ENCODE measurements at regions of chr6 and their contacts with region 1.

Region 1: DNA sequence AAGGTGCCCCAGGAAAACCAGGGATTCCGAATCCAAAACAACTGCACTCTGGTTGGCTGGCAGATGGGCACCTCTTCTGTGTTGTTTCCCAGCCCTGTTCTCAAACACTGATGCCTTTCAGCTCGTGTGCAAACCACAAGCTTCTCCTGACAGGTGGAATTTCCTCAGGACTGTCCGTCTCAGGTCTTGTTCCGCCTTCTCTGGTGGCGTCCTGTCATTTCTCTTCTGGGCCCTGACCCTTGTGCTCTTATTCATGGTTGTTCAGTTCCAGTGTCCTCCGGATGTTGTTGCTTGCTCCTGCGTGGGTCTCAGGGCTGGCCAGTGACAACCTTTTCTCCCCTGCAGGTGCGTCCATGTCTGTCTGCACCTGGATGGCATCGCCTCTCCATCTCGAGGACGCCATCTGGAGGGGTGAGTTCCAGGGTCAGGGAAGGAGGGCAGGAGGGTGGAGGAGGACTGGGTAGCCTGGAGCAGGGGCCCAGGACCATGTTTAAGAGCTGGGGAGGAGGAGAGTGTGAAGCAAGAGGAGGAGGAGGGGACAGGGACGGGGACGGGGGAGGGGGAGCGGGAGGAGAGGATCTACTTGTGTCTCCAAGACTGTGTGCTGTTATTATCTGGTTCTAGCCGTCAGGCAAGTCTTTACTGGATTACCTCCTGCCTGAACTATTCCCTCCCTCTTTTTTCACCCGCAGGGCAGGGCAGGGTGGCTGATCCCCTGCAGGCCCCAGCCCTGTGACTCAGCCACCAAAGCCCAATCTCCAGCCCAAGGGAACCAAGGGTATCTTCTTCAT is 32.0 kb upstream of the TULP1 start:
- DNase-seq: no peak
- ATAC-seq: no peak
- H3K4me3 Mint-ChIP-seq: no peak overlapping the region
- H3K27ac Mint-ChIP-seq: no peak overlapping the region
- H3K4me1 Mint-ChIP-seq: peaks cover 1% of the 10 kb centered on the region
- H3K27me3 Mint-ChIP-seq: peaks cover 6% of the 10 kb centered on the region

Region 2: DNA sequence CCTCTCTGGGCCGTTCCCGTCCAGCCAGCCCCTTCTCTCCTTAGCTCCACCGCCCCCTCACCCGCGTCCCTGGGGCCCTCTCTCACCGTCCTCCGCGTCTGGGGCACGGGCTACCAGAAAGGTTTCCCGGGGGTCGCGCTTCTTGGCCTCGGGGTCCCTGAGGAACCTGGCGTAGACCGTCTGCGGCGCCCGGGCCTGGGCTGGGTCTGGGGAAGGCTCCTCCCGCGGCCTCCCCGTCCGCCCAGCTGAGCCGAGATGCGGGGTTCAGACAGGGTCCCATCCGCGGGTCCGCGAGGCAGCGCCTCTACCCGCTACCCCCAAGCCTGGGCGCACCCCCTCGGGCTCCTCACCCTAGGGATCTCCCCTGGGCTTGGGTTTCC is 33.2 kb before region 1 on chr6:
- CTCF ChIA-PET with region 1: no interaction called
- DNase-seq: no peak
- ATAC-seq: no peak
- H3K4me3 Mint-ChIP-seq: no peak overlapping the region
- H3K27ac Mint-ChIP-seq: no peak overlapping the region
- H3K4me1 Mint-ChIP-seq: peaks cover 2% of the 10 kb centered on the region
- H3K27me3 Mint-ChIP-seq: peaks cover 29% of the 10 kb centered on the region

Region 3: DNA sequence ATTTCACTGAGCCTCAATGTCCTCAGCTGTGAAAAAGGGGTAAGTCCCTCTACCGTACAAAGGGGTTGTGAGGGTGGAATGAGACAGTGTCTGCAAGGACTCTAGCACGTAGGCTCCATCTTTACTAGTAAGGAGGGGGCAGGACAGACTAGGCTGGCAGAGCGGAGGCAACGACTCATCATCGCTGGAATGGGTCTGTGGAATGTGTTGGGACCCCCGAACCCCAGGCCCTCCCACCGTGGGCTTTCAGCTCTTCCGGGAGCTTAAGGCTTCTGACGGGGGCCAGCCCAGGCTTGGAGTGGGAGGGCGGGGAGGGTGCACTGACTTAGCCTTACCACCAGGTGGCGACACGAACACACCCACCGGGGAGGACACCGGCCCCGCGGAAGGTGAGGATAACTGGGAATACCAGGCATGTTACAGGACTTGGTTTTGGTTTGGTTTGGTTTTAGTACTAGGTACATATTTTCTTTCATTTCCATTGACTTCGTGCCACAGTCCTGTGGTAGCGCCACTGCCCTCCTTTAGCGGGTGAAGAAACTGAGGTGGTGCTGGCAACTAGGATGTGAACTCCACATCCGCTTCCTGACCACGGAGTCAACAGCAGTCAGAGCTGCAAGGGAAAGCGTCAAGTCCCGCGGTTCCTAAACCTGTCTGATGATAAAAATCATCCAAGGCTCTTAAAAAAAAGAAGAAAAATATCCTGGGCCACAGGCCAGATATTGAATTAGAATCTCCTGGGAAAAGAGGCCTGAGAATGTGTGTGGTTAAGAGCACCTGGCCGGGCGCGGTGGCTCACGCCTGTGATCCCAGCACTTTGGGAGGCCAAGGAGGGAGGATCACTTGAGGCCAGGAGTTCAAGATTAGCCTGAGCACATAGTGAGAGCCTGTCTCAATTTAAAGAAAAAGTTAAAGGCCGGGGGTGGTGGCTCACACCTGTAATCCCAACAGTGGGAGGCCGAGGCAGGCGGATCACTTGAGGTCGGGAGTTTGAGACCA is 21.8 kb before region 1 on chr6:
- CTCF ChIA-PET with region 1: interaction called, 73 read pairs
- DNase-seq: peak; percentile 88
- ATAC-seq: peak; percentile 91
- H3K4me3 Mint-ChIP-seq: peak overlapping the region; percentile 56
- H3K27ac Mint-ChIP-seq: peak overlapping the region; percentile 73
- H3K4me1 Mint-ChIP-seq: peaks cover 17% of the 10 kb centered on the region
- H3K27me3 Mint-ChIP-seq: peaks cover 5% of the 10 kb centered on the region

Measured in activated CD8-positive, alpha-beta memory T cell treated with anti-CD3 and anti-CD28 coated beads, Interleukin-2, amount 10 ng/mL, durations not matched to agents 7 days and 5 days (primary cell).